Right ventricle myocardium superior (tissue), 1 donor: ENCODE measurements at regions of chr9 and their contacts with region 1.

Region 1: DNA sequence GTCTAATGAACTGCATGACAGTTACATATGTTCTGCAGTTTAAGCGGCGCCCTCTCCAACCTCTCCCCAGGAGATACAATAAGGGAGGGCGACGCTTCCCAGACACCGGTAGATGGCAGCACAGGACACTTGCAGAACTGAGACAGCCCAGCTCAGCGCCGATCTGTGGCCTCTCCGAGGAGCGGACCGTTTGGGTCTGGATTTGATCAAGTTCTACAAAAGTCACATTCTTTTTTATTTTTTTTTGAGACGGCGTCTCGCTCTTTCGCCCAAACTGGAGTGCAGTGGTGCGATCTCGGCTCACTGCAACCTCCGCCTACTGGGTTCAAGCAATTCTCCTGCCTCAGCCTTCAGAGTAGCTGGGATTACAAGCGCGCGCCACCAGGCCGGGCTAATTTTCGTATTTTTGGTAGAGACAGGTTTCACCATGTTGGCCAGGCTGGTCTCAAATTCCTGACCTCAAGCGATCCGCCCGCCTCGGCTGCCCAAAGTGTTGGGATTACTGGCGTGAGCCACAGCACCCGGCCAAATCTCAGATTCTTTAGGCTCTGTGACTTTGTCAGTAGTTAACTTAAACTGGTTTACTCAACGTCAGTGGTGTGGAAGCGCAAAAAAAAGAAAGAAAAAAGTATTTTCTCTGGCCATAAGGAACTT is 1.4 kb upstream of the ATOSB start:
- DNase-seq: peak; percentile 93
- ATAC-seq: peak; percentile 86

Region 2: DNA sequence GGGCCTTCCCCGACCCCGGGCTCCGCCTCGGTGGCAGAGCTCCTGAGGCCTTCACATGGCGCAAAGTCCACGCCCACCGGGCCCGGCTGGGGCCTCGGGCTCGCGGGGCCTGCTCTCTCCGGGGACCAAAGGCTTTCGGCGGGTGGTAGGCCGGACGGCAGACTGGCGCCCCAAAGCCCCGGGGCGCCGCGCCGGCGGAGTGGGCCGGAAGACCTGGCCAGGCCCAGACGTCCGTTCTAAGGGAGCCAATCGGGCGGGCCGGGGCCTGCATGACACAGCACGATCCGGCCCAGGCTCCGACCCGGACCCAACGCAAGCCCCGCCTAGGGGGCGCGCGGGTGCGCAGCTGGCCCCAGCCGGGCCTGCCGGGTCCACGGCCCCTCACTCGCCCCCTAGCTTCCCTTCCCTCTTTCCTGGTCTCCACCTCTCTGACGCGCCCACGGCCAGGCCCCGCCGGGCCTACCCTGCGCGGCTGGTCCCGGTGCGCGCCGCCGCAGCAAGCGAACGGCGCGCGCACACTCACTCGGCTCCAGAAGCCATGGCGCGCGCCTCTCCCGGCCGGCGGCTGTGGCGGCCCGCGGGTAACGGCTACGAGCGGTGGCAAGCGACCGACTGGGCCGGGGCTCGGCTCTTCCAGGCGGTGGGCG is 45.1 kb before region 1 on chr9:
- intact Hi-C with region 1: no loop called
- DNase-seq: peak; percentile 93
- ATAC-seq: peak; percentile 83

Region 3: DNA sequence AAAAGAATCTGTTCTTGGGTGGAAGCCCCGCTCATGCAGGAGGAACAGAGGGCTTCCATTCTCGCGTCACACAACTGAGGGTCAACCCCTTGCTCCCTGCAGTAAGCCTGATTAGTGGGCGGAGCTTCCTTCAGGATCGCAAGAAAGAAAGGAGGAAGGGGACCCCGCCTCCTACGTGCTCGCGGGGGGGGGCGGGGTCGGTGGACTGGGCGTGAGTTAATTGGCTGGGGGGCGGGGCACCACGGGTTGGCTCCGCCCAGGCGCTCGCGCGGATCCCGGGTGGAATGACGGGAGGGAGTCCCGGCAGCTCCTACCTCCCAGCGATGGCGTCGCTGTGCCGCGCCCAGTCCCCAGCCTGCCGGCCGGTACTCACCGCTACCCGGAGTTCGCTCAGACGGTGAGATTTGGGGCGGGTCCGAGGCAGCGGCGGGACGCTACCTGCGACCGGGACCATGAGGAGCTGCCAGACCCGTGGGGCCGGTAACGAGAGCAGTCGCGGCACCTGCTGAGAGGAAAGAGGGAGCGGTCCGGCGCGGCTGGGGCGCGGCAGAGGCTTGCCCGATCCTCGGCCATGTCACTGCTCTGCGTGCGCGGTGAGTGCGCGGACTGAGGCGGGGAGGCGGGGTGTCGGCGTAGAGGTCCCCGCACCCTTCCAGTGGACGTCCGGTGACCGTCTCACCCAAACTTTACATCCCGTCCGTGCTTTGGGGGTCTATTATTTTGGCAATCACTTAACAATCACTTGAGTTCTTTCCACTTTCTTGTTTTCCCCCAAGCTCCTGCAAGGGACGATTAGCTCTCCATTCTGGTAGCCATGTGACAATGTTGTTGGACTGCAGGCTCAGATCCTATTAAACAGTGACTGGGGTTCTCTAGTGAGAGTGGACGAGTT is 44.9 kb after region 1 on chr9 and contains the start of gene UNC13B:
- intact Hi-C with region 1: loop called (anchors 10 kb)
- DNase-seq: peak; percentile 97
- ATAC-seq: peak; percentile 99
- total RNA-seq, gene UNC13B: 20.9 TPM

Region 4: GRCh38 chr9:35258676-35259474 is 141.8 kb after region 1 on chr9:
- intact Hi-C with region 1: loop called (anchors 5 kb)
- DNase-seq: peak; percentile 79
- ATAC-seq: peak; percentile 79

Region 5: DNA sequence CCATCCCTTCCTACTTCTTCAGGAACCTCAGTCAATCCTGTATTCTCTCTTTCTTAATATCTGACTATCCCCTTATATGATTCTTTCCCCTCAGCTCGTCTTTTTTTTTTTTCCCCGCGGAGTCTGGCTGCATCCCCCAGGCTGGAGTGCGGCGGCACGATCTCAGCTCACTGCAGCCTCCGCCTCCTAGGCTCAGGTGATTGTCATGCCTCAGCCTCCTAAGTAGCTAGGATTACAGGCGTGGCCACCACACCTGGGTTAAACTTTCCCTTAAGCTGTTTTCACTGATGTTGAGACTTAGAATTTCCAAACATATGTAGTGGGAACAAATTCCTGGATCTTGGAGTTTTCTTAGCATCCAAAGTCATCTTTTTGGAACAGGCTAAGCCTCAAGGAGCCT is 359.6 kb after region 1 on chr9:
- intact Hi-C with region 1: loop called (anchors 2 kb)
- DNase-seq: no peak
- ATAC-seq: no peak